Gastrocnemius medialis (tissue), 4 donors: ENCODE measurements at regions of chr9 and their contacts with region 1.

Region 1: DNA sequence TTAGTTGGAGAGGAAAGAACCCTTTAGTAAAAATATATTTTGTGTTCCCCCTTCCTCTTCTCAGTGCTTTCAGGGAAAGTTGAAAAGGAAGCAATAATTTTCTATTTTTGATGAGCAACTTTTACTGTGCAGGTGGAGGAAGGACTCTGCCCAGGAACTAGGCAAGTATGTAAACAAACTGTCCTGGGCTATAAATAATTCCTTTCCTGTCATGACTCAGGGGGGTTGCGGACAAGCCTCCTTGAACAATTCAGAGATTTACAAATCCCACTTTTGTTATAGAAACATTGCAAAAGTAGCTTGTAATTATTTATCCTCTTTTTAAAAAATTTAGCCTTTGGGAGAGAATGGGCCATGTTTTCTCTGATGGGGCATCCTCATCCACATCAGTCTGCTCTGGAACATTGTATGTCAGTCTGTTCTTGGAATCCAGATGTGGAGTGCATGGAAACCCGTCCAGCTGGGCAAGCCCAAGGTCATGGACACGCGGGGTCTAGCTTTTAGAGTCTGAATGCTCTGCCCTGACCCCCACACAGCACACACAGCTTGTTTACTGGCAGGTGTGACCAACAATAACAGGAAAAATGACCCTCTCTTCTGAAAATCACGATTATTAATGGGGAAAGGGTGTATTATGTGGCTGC is 127.6 kb downstream of the GADD45G start:
- DNase-seq: peak in 1 of 2 donors; percentile 39
- ATAC-seq: peak; percentile 79 to 96
- H3K4me3 ChIP-seq: peak overlapping the region in 1 of 4 donors; percentile 15
- H3K27ac ChIP-seq: peak overlapping the region; percentile 61 to 74 (median 68)
- H3K4me1 ChIP-seq: peaks cover 19 to 21% of the 10 kb centered on the region in 2 donors
- H3K27me3 ChIP-seq: no peaks in the 10 kb centered on the region
- CTCF ChIP-seq: no peak
- POLR2A ChIP-seq: no peak

Region 2: DNA sequence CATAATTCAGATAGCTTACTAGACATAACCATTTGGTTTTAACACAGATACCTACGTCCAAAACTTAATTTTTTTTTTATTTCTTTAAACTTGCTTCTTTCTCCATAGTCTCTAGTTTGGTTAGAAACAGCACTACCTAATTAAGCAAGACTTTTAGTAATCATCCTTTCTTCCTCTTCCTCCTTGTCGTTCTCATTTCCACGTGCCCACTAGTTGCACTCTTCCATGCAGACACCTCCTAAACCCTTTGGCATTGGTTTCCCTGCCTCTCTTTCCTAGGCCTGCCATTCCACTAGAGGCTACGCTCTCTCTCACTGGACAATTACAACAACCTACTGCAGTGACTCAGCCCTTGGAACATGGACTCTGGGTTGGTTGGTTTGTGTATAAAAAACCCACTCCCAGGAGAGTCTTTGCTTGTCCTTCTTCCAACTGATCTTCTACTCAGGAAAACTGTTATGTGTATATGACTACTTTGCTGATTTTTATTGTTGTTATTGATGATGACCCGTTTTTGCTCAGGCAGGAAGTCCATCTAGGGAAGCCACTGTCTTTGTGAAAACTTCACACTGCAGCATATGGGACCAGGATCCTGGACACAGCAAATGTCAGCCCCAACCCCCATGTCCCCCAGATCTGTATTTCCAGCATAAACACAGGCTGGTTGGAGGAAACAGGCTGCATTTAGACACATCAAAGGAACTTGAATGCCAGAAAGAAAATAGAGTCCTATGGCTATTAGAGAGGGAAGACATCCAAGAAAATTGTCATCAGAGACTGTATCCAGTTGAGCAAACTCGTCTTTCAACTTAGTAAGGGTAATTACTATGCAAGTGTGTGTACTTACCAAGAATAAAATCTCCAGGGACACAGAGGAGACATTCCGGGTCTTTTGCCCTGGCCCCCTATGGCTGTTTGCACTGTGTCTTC is 375.6 kb after region 1 on chr9:
- in situ Hi-C with region 1: no loop called
- intact Hi-C with region 1: loop called (anchors 2 kb)
- DNase-seq: peak; percentile 39 to 55
- ATAC-seq: peak; percentile 56 to 71
- H3K4me3 ChIP-seq: no peak overlapping the region
- H3K27ac ChIP-seq: peak overlapping the region; percentile 78 to 95 (median 87)
- H3K4me1 ChIP-seq: peaks cover 41 to 43% of the 10 kb centered on the region in 2 donors
- H3K27me3 ChIP-seq: no peaks in the 10 kb centered on the region
- CTCF ChIP-seq: no peak
- POLR2A ChIP-seq: no peak

Region 3: DNA sequence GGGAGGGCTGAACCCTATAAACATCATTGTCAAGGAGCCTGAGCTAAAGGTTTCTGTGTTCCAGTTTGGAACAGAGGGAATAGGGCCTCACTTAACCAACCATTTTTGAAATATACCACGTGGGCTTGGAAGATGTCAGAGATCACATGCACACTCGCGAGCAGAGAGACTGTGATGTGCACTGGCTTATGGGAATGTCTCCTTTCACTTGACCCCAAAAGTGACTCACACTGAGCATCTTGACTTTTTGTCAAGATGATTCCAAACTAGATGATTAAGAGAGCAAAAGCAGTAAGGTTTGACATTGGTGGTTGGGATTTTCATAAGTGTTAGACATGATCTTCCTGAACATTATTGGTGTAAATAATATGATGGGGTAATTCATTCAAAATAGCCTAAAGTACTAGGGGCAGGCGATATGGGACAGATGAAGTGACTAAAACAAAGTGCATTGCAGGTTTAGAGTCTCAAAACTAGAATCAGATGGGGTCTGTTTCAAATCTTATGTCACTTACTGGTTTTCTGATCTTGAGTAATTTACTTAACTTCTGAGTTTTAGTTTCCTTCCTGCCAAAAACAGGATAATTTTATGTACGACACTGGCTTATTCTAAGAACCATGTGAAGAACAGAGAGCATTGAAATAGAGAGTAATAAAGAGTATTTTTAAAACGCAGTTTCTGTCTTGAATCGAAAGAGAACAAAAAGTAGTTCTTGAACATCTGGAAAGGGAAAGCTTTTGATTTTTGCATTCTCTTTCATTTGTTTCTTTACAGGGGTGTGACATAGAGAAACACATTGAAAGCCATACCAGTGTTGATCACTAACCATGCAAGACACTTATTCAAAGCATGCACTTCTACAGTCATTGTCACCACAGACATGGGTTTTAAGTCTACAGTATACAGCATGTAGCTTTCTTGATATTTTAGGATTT is 527.2 kb after region 1 on chr9:
- in situ Hi-C with region 1: no loop called
- intact Hi-C with region 1: no loop called
- DNase-seq: no peak
- ATAC-seq: no peak
- H3K4me3 ChIP-seq: no peak overlapping the region
- H3K27ac ChIP-seq: no peak overlapping the region
- H3K4me1 ChIP-seq: no peaks in the 10 kb centered on the region
- H3K27me3 ChIP-seq: no peaks in the 10 kb centered on the region
- CTCF ChIP-seq: no peak
- POLR2A ChIP-seq: no peak